ENCODE measurements at regions of chr5 and their contacts with region 1.

Region 1: GRCh38 chr5:35717718-35718117 is 100.1 kb downstream of the SPEF2 start:
- DNase-seq: no peak
- ATAC-seq: no peak
- H3K4me3 ChIP-seq: no peak overlapping the region
- H3K4me3 Mint-ChIP-seq: no peak overlapping the region
- H3K27ac ChIP-seq: no peak overlapping the region
- H3K27ac Mint-ChIP-seq: no peak overlapping the region
- H3K4me1 ChIP-seq: no peaks in the 10 kb centered on the region
- H3K4me1 Mint-ChIP-seq: peaks cover 0 to 4% (median 0%) of the 10 kb centered on the region in 3 donors
- H3K27me3 ChIP-seq: no peaks in the 10 kb centered on the region
- H3K27me3 Mint-ChIP-seq: no peaks in the 10 kb centered on the region

Region 2: GRCh38 chr5:35707659-35708058 is 10.1 kb before region 1 on chr5:
- CTCF ChIA-PET with region 1: interaction called in 1 of 2 experiments, 10 read pairs
- POLR2A ChIA-PET with region 1: no interaction called
- DNase-seq: peak in 1 of 35 experiments; percentile 2
- ATAC-seq: peak in 1 of 4 experiments; percentile 54
- H3K4me3 ChIP-seq: no peak overlapping the region
- H3K4me3 Mint-ChIP-seq: no peak overlapping the region
- H3K27ac ChIP-seq: no peak overlapping the region
- H3K27ac Mint-ChIP-seq: no peak overlapping the region
- H3K4me1 ChIP-seq: no peaks in the 10 kb centered on the region
- H3K4me1 Mint-ChIP-seq: peaks cover 10 to 16% (median 10%) of the 10 kb centered on the region in 3 donors
- H3K27me3 ChIP-seq: no peaks in the 10 kb centered on the region
- H3K27me3 Mint-ChIP-seq: no peaks in the 10 kb centered on the region